ENCODE measurements at regions of chr1 and their contacts with region 1.

Region 1: GRCh38 chr1:248837794-248838356 is at the start of gene ZNF672:
- DNase-seq: peak; percentile 89
- H3K4me3 ChIP-seq: peak within 1 kb of the TSS; percentile 97
- H3K27me3 ChIP-seq: no peaks in the 10 kb centered on the region
- CTCF ChIP-seq: no peak
- polyA plus RNA-seq, gene ZNF672: 13.9 and 17.1 TPM in 2 replicates

Region 2: DNA sequence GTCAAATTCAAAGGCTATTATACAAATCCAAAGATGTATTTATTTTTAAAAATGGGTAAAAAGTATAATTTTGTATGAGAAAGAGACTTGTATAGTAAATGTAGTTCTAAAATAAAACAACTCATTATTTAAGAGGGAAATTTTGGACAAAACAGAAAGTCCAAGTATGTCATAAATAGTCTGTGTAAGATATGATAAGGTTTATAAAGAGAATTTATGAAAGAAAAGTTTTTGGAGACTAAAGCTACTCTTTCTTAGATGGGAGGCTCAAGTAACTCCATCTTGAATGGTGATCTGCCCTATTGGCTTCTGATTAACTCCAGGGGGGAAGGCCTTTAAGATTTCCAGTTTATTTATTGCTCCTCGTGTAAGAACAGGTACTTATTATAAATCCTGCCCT is 167.9 kb before region 1 on chr1:
- CTCF ChIA-PET with region 1: no interaction called
- POLR2A ChIA-PET with region 1: no interaction called
- DNase-seq: no peak
- H3K4me3 ChIP-seq: no peak overlapping the region
- H3K27me3 ChIP-seq: no peaks in the 10 kb centered on the region
- CTCF ChIP-seq: no peak

Region 3: DNA sequence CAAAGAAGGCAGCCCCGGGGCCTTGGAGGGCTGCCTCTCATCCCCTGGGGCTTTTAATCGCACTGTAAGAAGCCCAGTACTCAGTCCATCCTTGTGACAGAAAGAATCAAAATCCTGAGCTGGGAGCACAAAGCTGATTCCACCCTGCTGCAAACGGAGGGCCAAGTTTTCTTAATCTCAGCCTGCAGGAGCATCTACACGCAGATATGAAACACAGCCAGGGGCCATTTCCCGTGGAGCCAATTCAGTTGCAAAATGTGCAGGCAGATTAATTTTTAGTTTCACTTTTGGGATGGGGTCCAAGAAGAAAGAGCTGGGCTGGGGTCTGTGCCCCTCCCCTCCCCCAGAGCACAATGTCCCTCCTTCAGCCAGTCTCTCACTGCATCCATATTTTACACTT is 86.7 kb before region 1 on chr1:
- CTCF ChIA-PET with region 1: no interaction called
- POLR2A ChIA-PET with region 1: no interaction called
- DNase-seq: no peak
- H3K4me3 ChIP-seq: no peak overlapping the region
- H3K27me3 ChIP-seq: no peaks in the 10 kb centered on the region
- CTCF ChIP-seq: no peak

Region 4: GRCh38 chr1:248813546-248813945 is 24.3 kb before region 1 on chr1:
- CTCF ChIA-PET with region 1: no interaction called
- POLR2A ChIA-PET with region 1: no interaction called
- DNase-seq: no peak
- H3K4me3 ChIP-seq: no peak overlapping the region
- H3K27me3 ChIP-seq: no peaks in the 10 kb centered on the region
- CTCF ChIP-seq: no peak

Region 5: GRCh38 chr1:248825909-248826760 is 11.7 kb before region 1 on chr1 and contains the start of gene SH3BP5L:
- CTCF ChIA-PET with region 1: interaction called, 21 read pairs
- POLR2A ChIA-PET with region 1: interaction called, 3 read pairs
- DNase-seq: peak; percentile 72
- H3K4me3 ChIP-seq: peak within 1 kb of the TSS; percentile 69
- H3K27me3 ChIP-seq: no peaks in the 10 kb centered on the region
- CTCF ChIP-seq: peak; percentile 76
- polyA plus RNA-seq, gene SH3BP5L: 23.2 and 32.5 TPM in 2 replicates

Region 6: DNA sequence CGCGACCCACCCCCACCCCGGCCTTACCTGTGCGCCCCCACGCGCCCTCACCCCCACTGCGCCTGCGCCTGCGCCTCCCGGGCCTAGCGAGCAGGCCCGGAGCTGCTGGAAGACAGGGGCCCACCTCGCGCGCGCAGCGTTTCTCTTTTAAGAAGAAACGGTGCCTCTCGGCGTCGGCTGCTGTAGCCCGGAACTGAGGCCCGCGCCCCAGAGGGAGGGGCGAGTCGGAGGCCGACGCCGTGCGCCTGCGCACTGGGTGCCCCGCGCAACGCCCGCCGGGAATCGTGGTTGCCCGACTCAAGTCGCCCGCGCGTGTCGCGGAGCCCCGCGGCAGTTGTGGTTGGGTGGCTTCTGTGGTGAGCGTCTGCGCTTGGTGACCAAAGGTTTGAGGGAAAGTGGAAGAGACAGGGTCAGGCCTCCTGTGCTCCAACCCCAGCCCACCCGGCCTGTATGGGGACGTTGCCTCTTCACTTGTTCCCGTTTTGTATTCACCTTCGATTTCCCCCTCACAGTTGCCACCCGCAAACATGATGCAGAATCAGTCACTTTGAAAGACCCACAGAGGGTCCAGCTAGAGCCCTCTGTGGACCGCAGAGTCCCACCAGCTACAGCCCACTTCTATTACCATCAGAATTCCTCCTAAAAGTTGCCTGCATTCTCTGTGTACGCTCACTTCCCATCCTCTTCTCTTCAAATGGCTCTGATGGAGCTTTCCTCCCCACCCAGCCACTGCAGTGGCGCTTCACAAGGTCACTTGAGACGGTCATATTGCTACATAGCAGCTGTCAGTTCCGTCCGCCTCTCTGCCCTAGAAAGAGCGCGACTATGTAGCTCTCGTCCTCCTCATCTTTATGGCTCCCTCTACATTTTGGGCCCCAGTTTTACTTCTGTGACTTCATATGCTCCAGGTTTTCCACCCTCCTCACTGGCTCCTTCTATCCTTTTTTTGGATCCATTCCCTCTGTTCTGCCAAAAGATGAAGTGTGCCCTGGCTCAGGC is 21.3 kb after region 1 on chr1 and contains the start of gene ZNF692:
- CTCF ChIA-PET with region 1: interaction called, 20 read pairs
- POLR2A ChIA-PET with region 1: interaction called, 5 read pairs
- DNase-seq: peak; percentile 74
- H3K4me3 ChIP-seq: peak within 1 kb of the TSS; percentile 50
- H3K27me3 ChIP-seq: no peaks in the 10 kb centered on the region
- CTCF ChIP-seq: no peak
- polyA plus RNA-seq, gene ZNF692: 13.1 and 19.5 TPM in 2 replicates

Region 7: GRCh38 chr1:248900637-248901036 is 62.8 kb after region 1 on chr1:
- CTCF ChIA-PET with region 1: no interaction called
- POLR2A ChIA-PET with region 1: no interaction called
- DNase-seq: no peak
- H3K4me3 ChIP-seq: no peak overlapping the region
- H3K27me3 ChIP-seq: peaks cover 8% of the 10 kb centered on the region; the same call in 1 of the 2 replicates
- CTCF ChIP-seq: no peak

Region 8: DNA sequence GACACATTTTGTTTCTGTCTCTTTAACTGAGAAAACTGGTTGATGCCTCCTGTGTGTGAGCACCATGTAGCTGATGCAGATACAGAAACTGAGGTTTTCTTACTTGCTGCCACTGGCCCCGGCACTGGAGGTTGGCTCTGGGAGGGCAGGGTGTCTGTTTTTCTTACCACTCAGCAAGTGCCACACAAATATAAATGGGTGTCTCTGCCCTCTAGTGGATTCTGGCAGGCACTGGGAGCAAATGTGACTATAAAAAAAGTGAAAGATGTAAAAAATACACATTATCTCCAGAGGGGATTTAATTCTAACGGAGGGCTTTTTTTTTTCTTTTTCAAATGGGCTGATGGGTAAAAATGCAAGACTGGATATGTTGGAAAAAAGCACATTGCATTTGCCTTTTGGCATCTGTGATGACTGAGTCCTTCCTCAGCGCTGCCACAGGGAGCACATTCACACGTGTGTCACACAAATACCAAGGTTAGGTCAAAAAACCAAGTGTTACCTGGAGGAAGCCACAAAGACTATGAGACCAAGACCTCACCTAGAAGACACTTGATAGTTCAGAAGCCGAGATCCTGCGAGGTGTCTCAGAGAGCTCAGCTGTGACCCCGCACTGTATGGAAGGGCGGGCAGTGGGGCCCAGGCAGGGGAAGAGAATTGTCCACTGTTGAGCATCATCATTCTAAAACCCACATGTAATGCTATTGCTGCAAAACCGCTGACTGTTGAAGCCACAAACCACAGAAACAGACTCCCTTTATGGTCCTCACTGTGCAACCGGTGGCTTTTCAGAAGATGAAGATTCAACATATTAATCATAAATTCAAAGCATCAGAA is 87.0 kb after region 1 on chr1:
- CTCF ChIA-PET with region 1: interaction called, 11 read pairs
- POLR2A ChIA-PET with region 1: no interaction called
- DNase-seq: no peak
- H3K4me3 ChIP-seq: no peak overlapping the region
- H3K27me3 ChIP-seq: no peaks in the 10 kb centered on the region
- CTCF ChIP-seq: peak; percentile 71